Naive thymus-derived CD4-positive, alpha-beta T cell (primary cell): ENCODE measurements at regions of chr5 and their contacts with region 1.

Region 1: DNA sequence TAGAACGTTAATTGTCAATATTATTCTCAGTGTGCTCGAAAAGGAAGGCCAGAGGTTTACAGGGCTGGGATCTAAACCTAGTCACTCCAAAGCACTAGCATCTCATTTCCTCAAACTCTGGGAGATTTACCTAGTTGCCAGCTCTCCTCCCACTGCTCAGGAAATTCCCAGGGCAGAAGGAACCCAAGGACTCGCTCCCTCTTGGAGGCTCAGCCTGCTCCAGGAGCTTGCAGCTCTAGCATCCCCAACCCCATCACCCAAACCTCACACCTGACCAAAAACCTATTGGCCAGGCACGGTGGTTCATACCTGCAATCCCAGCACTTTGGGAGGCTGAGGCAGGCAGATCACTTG is 26.0 kb downstream of the SERINC5 start:
- DNase-seq: no peak
- ATAC-seq: no peak
- H3K4me3 ChIP-seq: no peak overlapping the region
- H3K4me3 Mint-ChIP-seq: peak overlapping the region in 8 of 10 donors; percentile 26 to 72 (median 60)
- H3K27ac ChIP-seq: peak overlapping the region; percentile 34
- H3K27ac Mint-ChIP-seq: peak overlapping the region in 7 of 9 donors; percentile 43 to 91 (median 71)
- H3K4me1 ChIP-seq: peaks cover 10 to 56% of the 10 kb centered on the region in 2 donors
- H3K4me1 Mint-ChIP-seq: peaks cover 58 to 92% (median 80%) of the 10 kb centered on the region in 7 donors
- H3K27me3 ChIP-seq: no peaks in the 10 kb centered on the region
- H3K27me3 Mint-ChIP-seq: no peaks in the 10 kb centered on the region

Region 2: DNA sequence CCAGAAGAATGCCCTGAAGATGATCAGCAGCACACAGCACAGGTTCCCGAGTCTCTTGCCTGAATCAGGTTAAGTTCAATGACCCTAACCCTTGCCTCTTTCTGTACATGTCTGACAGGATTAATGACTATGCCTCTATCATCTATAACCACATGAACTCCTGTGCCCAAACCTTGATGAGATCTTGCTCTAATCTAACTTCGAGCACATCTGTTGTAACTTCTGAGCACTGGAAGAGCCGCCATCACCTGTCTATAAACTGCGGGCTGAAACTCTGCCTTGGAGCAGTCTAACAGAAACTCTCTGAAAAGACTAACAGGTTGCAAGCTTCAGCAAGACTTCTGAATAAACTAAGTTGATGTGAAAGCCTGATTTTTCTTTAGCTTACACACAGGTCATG is 18.6 kb before region 1 on chr5:
- CTCF ChIA-PET with region 1: no interaction called
- POLR2A ChIA-PET with region 1: interaction called, 4 read pairs
- intact Hi-C with region 1: loop called in 1 of 2 experiments (anchors 2 kb)
- DNase-seq: no peak
- ATAC-seq: no peak
- H3K4me3 ChIP-seq: no peak overlapping the region
- H3K4me3 Mint-ChIP-seq: peak overlapping the region; percentile 8 to 85 (median 74)
- H3K27ac ChIP-seq: peak overlapping the region; percentile 56
- H3K27ac Mint-ChIP-seq: peak overlapping the region; percentile 44 to 99 (median 93)
- H3K4me1 ChIP-seq: peaks cover 32 to 93% of the 10 kb centered on the region in 2 donors
- H3K4me1 Mint-ChIP-seq: peaks cover 47 to 100% (median 97%) of the 10 kb centered on the region in 7 donors
- H3K27me3 ChIP-seq: no peaks in the 10 kb centered on the region
- H3K27me3 Mint-ChIP-seq: no peaks in the 10 kb centered on the region

Region 3: DNA sequence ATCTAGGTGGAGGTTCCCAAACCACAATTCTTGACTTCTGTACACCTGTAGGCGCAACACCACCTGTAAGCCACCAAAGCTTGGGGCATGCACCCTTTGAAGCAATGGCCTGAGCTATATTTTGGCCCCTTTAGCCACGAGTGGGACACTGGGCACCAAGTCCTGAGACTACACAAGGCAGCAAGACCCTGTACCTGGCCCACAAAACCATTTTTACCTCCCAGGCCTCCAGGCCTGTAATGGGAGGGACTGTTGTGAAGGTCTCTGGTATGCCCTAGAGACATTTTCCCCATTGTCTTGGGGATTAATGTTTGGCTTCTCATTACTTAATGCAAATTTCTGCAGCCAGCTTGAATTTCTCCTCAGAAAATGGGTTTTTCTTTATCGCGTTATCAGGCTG is 233.4 kb after region 1 on chr5:
- CTCF ChIA-PET with region 1: no interaction called
- POLR2A ChIA-PET with region 1: no interaction called
- intact Hi-C with region 1: no loop called
- DNase-seq: no peak
- ATAC-seq: no peak
- H3K4me3 ChIP-seq: no peak overlapping the region
- H3K4me3 Mint-ChIP-seq: no peak overlapping the region
- H3K27ac ChIP-seq: no peak overlapping the region
- H3K27ac Mint-ChIP-seq: no peak overlapping the region
- H3K4me1 ChIP-seq: no peaks in the 10 kb centered on the region
- H3K4me1 Mint-ChIP-seq: no peaks in the 10 kb centered on the region
- H3K27me3 ChIP-seq: no peaks in the 10 kb centered on the region
- H3K27me3 Mint-ChIP-seq: no peaks in the 10 kb centered on the region